MCF 10A (cell line): ENCODE measurements at regions of chr3 and their contacts with region 1.

Region 1: GRCh38 chr3:13245615-13245978 is 172.4 kb upstream of the IQSEC1 start:
- DNase-seq: no peak
- H3K4me3 Mint-ChIP-seq: no peak overlapping the region
- H3K27ac Mint-ChIP-seq: no peak overlapping the region
- H3K4me1 Mint-ChIP-seq: no peaks in the 10 kb centered on the region
- H3K27me3 Mint-ChIP-seq: peaks cover under 1% of the 10 kb centered on the region
- CTCF ChIP-seq: no peak

Region 2: DNA sequence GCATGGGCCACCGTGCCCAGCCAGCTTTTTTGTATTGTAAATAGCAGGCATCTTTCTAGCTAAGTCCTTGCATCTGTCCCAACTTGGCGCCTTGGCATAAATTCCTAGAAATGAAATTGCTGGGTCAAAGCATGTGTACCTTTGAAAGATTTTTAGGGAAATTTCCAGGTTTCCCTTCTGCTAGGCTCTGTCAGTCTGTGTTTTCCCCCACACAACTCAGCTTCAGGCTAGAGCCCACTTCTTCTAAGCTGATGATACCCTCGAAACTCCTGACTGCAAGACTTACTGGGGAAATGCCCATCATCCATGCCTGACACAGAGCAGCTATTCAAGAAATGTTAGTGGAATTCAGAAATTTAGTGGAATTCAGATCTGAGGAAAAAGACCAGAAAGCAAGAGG is 393.4 kb before region 1 on chr3:
- CTCF ChIA-PET with region 1: no interaction called
- POLR2A ChIA-PET with region 1: no interaction called
- intact Hi-C with region 1: no loop called
- DNase-seq: no peak
- H3K4me3 Mint-ChIP-seq: no peak overlapping the region
- H3K27ac Mint-ChIP-seq: no peak overlapping the region
- H3K4me1 Mint-ChIP-seq: no peaks in the 10 kb centered on the region
- H3K27me3 Mint-ChIP-seq: peaks cover 19% of the 10 kb centered on the region
- CTCF ChIP-seq: no peak

Region 3: GRCh38 chr3:13215940-13216546 is 29.6 kb before region 1 on chr3:
- CTCF ChIA-PET with region 1: no interaction called
- POLR2A ChIA-PET with region 1: interaction called, 3 read pairs
- intact Hi-C with region 1: loop called (anchors 1 kb)
- DNase-seq: peak; percentile 93
- H3K4me3 Mint-ChIP-seq: no peak overlapping the region
- H3K27ac Mint-ChIP-seq: no peak overlapping the region
- H3K4me1 Mint-ChIP-seq: peaks cover 12% of the 10 kb centered on the region
- H3K27me3 Mint-ChIP-seq: no peaks in the 10 kb centered on the region
- CTCF ChIP-seq: no peak

Region 4: DNA sequence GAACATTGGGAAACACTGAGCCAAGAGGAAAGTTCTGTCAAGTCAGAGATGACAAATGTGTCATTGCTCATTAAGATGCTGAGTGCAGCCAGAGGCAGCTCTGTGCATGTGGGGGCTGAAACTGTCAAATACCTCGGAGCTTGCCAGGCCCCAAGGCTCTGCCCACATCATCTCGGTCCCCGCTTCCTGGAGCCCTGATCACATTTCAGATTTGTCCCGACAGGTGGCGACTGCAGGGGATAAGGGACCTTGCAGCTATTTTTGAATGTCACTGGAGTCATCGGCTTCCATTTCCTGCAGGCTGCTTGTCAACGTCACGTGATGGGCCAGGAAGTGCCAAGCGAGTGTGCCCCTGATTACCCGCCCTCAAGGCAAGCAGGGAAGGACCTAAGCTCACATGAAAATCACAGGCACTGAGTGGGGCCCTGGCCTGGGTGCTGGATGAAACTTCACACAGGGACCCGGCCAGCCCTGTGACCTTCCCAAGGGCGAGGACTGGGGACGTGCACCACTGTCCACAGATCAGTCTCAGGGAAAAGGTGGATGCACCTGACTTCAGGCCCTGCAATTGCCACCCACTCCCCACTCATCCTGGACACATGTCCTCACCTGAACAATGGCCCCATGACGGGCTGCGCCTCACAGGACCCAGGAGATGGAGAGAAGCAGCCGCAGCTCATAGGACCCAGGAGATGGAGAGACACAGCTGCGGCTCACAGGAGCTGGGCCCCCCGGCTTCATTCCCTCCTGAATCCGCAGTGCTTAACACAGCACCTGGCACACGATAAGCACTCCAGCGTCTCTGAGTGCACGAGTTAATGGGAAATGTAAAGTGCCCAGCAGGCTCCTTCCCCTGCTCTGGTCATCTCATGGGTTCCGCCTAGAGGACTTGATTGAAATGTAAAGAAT is 101.1 kb after region 1 on chr3:
- CTCF ChIA-PET with region 1: no interaction called
- POLR2A ChIA-PET with region 1: no interaction called
- intact Hi-C with region 1: no loop called
- DNase-seq: no peak
- H3K4me3 Mint-ChIP-seq: no peak overlapping the region
- H3K27ac Mint-ChIP-seq: no peak overlapping the region
- H3K4me1 Mint-ChIP-seq: no peaks in the 10 kb centered on the region
- H3K27me3 Mint-ChIP-seq: no peaks in the 10 kb centered on the region
- CTCF ChIP-seq: no peak